A549 (cell line): ENCODE measurements at regions of chr3 and their contacts with region 1.

Region 1: DNA sequence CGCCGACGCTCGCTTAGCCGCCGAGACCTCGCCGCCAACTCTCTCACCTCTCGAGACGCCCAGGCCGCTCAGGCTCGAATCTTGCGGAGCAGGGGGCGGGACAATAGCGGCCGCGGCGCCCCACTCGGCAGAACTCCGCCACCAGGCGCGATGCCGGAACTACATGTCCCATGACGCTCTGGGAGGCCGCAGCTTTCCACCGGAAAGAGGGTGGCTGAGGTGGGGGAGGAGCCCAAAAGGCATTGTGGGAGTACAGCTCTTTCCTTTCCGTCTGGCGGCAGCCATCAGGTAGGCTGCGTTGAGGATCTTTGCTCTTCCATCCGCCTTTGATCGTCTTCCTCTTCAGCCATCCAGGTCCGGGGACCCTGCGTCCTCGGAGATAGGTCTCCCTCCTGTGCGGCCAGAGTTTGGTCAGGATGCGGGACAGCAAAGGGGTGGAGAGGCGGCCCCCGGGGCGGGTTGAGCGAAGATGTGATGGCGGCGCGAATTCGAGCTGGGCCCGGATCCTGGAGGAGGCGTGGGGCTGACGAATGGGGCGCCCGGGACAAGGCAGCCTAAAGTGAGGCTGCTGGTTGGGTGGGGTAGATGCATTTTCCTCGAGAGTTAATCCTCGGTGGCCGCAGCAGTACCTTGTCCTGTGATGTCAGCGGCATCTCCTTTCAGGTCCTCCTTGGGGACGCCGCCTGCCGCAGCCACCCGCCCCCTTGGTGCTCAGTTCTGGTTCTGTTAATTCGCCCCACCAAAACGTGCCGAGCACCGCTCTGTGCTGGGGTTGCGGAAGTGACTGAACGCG is at the starts of genes NKIRAS1 and RPL15:
- DNase-seq: peak; percentile 94 to 97
- ATAC-seq: peak; percentile 94 to 95
- H3K4me3 ChIP-seq: peak within 1 kb of the TSS; percentile 91
- H3K27ac ChIP-seq: peak within 1 kb of the TSS; percentile 97 to 99
- H3K4me1 ChIP-seq: peaks cover 46% of the 10 kb centered on the region
- CTCF ChIP-seq: no peak
- EP300 ChIP-seq: no peak; a peak in 1 of 5 replicates
- POLR2A ChIP-seq: peak; percentile 99
- RAD21 ChIP-seq: peak in 1 of 2 experiments; percentile 5; a peak in 1 of 5 replicates
- polyA plus RNA-seq, gene NKIRAS1: 12.2 and 16.8 TPM in 2 replicates
- polyA plus RNA-seq, gene RPL15: 2,933 and 3,149 TPM in 2 replicates

Region 2: GRCh38 chr3:23668430-23668904 is 248.6 kb before region 1 on chr3:
- CTCF ChIA-PET with region 1: no interaction called
- POLR2A ChIA-PET with region 1: interaction called, 12 read pairs
- DNase-seq: peak; percentile 63 to 93
- ATAC-seq: peak; percentile 91 to 92
- H3K4me3 ChIP-seq: no peak overlapping the region
- H3K27ac ChIP-seq: peak overlapping the region; percentile 83 to 89
- H3K4me1 ChIP-seq: peaks cover 43% of the 10 kb centered on the region
- CTCF ChIP-seq: no peak
- EP300 ChIP-seq: peak; percentile 46 to 90; a peak in 3 of 5 replicates
- POLR2A ChIP-seq: no peak
- RAD21 ChIP-seq: peak; percentile 31 to 54

Region 3: GRCh38 chr3:23778446-23778845 is 138.6 kb before region 1 on chr3:
- CTCF ChIA-PET with region 1: no interaction called
- POLR2A ChIA-PET with region 1: no interaction called
- DNase-seq: no peak
- ATAC-seq: no peak
- H3K4me3 ChIP-seq: no peak overlapping the region
- H3K27ac ChIP-seq: no peak overlapping the region
- H3K4me1 ChIP-seq: no peaks in the 10 kb centered on the region
- CTCF ChIP-seq: no peak
- EP300 ChIP-seq: no peak
- POLR2A ChIP-seq: no peak
- RAD21 ChIP-seq: no peak

Region 4: DNA sequence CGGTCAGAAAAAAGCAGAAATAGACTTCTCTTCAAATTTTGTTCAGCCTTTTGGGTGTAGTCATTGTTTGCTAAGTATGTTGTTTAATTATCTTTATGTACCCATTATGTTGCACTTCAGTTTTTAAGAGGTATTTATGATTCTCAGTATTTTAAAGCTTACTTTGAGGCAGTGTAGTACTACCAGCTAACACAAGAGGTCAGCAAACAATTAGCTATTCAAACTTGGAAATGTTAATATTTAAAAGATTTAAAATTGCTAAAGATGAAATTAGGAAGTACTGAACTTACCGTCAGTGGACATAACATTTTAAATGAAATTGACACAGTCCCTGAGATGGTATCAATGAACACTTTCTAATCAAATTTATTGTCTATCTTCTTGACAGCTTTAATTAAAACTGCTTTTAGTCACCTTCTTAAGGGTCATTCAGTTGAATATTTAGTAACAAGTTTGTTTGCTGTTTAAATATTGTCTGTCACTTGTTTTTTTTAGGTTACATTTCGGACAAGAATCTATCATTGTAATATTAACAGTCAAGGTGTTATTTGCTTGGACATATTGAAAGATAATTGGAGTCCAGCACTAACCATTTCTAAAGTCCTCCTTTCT is 28.4 kb before region 1 on chr3:
- CTCF ChIA-PET with region 1: interaction called, 7 read pairs
- POLR2A ChIA-PET with region 1: interaction called, 19 read pairs
- DNase-seq: peak in 1 of 2 experiments; percentile 47
- ATAC-seq: peak in 1 of 2 experiments; percentile 47; a peak in 2 of 6 replicates
- H3K4me3 ChIP-seq: no peak overlapping the region
- H3K27ac ChIP-seq: no peak overlapping the region
- H3K4me1 ChIP-seq: peaks cover 13% of the 10 kb centered on the region; the same call in 2 of the 3 replicates
- CTCF ChIP-seq: peak; percentile 75
- EP300 ChIP-seq: no peak
- POLR2A ChIP-seq: no peak
- RAD21 ChIP-seq: peak; percentile 75 to 76

Region 5: GRCh38 chr3:23900744-23901143 is 16.3 kb before region 1 on chr3:
- CTCF ChIA-PET with region 1: interaction called, 4 read pairs
- POLR2A ChIA-PET with region 1: interaction called, 16 read pairs
- DNase-seq: peak; percentile 32 to 35
- ATAC-seq: peak; percentile 69 to 78
- H3K4me3 ChIP-seq: no peak overlapping the region
- H3K27ac ChIP-seq: no peak overlapping the region
- H3K4me1 ChIP-seq: no peaks in the 10 kb centered on the region; the same call in 2 of the 3 replicates
- CTCF ChIP-seq: no peak
- EP300 ChIP-seq: no peak
- POLR2A ChIP-seq: no peak
- RAD21 ChIP-seq: peak in 1 of 2 experiments; percentile 7; a peak in 1 of 5 replicates

Region 6: DNA sequence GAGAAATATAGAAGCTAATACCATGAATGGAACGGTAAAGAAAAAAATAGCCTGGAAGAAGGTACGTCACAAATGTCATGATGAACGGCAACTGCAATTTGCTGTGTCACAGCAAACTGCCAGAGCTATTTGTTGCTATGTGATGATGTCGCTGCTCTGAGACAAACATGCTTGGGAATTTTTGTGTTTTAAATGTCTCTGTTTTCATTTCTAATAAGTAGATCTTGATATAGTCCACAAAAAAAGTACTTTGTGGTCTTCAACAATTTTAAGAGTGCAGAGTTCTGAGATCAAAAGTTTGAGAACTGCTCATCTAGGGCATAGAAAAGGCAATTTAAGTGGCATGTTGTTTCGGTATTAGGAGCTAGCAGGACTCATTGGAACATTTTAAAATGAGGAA is 23.7 kb after region 1 on chr3:
- CTCF ChIA-PET with region 1: no interaction called
- POLR2A ChIA-PET with region 1: interaction called, 51 read pairs
- DNase-seq: peak in 1 of 2 experiments; percentile 20
- ATAC-seq: no peak
- H3K4me3 ChIP-seq: no peak overlapping the region
- H3K27ac ChIP-seq: no peak overlapping the region
- H3K4me1 ChIP-seq: peaks cover 5% of the 10 kb centered on the region; the same call in 2 of the 3 replicates
- CTCF ChIP-seq: no peak
- EP300 ChIP-seq: no peak
- POLR2A ChIP-seq: no peak
- RAD21 ChIP-seq: no peak

Region 7: DNA sequence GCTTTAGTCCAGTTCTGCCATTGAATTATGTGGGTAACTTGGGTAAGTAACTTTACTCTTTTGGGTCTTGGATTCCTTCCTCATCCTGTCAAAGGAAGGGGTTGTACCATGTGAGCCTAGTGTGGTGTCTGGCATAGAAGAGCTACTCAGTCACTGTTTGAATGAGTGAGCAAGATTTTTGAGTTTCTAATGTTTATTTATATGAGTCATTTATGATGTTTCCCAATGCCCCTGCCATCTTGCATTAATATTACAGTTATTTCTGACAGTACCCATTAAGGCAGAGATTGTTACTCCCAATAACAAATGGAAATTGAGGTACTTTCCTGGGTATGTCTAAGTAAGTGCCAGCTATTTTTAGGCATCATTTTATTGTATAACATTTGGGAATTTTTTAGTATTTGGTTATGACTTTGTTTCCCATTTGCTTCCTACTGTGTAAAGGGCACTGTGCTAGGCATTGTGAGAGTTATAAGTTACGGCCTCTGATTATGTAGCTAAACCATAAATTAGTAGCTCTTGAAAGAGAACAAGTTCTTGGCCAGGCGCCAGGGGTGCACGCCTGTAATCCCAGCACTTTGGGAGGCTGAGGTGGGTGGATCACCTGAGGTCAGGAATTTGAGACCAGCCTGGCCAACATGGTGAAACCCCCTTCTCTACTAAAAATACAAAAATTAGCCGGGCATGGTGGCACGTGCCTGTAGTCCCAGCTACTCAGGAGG is 51.5 kb after region 1 on chr3:
- CTCF ChIA-PET with region 1: no interaction called
- POLR2A ChIA-PET with region 1: interaction called, 11 read pairs
- DNase-seq: peak; percentile 40 to 60
- ATAC-seq: peak; percentile 76 to 78
- H3K4me3 ChIP-seq: no peak overlapping the region
- H3K27ac ChIP-seq: peak overlapping the region; percentile 28 to 43; a peak in 4 of 6 replicates
- H3K4me1 ChIP-seq: peaks cover 25% of the 10 kb centered on the region
- CTCF ChIP-seq: no peak
- EP300 ChIP-seq: 0 out of 5 replicates have a peak, but pooled peaks of 1 of the 2 experiments have one; percentile 14
- POLR2A ChIP-seq: no peak
- RAD21 ChIP-seq: no peak

Region 8: DNA sequence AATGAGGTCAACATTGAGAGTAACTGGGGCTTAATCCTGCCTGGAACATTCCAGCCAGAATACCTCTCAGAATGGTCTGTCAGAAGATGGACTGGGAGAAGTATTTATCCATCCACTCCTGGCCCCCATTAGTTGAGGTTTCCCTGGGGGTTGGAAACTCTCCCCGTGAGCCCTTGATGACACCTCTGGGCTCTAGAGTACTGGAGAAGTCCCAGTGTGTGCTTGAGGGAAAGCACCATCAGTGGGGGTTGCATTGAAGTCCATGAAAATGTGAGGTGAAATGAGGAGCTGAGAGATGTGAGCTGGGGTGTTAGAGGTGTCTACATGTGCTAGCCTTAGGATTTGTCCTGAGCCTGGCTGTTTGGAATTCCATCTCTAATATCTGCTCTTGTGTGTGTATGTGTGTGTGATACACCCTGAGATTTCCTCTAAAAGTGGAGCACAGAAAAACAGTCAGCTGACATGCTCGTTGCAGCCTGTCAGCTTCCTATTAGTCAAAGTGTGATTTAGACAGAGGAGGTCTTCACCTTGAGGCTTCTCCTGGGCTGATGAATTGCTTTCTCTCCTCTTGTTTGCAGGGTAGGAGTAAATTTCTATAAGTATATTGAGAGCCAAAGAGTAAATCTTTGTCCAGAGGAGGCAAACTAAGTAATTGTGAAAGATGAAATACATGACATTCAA is 95.6 kb after region 1 on chr3:
- CTCF ChIA-PET with region 1: no interaction called
- POLR2A ChIA-PET with region 1: no interaction called
- DNase-seq: no peak
- ATAC-seq: no peak
- H3K4me3 ChIP-seq: no peak overlapping the region
- H3K27ac ChIP-seq: no peak overlapping the region
- H3K4me1 ChIP-seq: peaks cover 11% of the 10 kb centered on the region; the same call in 2 of the 3 replicates
- CTCF ChIP-seq: no peak
- EP300 ChIP-seq: no peak
- POLR2A ChIP-seq: no peak
- RAD21 ChIP-seq: no peak